Mammary epithelial cell (primary cell): ENCODE measurements at regions of chr1 and their contacts with region 1.

Region 1: DNA sequence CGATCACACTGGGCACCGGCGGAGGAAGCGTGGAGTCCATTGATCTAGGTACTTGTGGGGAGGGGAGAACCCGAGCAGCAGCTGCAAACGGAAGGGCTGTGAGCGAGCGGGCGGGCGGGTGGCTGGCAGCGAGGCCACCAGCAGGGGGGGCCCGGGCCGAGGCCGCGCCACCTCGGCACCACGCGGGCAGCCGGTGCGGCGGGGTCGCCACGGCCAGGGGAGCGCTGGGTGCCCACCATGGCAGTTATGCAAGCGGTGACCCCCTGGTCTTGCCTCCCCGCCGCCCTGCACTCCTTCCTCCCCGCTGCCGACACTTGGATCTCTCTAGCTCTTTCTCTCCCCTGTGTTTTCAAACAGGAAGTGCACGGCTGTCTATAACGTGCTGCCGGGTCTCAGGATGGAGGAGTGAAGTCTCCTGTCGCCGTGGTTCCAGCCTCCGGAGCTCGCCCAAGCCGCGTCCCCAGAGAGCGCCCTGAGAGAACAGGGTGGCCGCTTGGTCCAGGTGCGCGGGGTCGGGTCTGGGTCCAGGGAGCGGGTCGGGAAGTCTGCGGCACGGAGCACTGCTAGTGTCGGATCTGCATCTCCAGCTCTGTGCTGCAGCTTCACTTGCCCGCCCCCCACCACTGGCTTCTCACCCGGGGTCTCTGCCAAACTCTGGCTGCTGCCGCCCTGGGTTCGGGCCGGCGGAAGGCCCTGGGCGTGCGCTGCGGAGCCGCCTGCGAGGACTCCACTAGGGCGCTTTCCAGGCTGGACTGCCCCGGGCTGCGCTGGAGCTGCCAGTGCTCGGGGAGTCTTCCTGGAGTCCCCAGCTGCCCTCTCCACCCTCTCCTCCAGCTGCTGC is 22.7 kb downstream of the LRRC8D start:
- DNase-seq: peak; percentile 63
- H3K4me3 ChIP-seq: peak overlapping the region; percentile 48 to 88 (median 72)
- H3K27ac ChIP-seq: peak overlapping the region; percentile 54
- H3K4me1 ChIP-seq: peaks cover 16% of the 10 kb centered on the region
- H3K27me3 ChIP-seq: no peaks in the 10 kb centered on the region
- CTCF ChIP-seq: peak; percentile 32 to 53

Region 2: GRCh38 chr1:89804642-89805237 is 38.8 kb before region 1 on chr1:
- CTCF ChIA-PET with region 1: interaction called, 4 read pairs
- dilution Hi-C with region 1: no loop called
- in situ Hi-C with region 1: no loop called
- intact Hi-C with region 1: loop called (anchors 1 kb)
- DNase-seq: peak; percentile 64
- H3K4me3 ChIP-seq: no peak overlapping the region
- H3K27ac ChIP-seq: no peak overlapping the region
- H3K4me1 ChIP-seq: peaks cover 19% of the 10 kb centered on the region
- H3K27me3 ChIP-seq: no peaks in the 10 kb centered on the region
- CTCF ChIP-seq: peak; percentile 93 to 95

Region 3: GRCh38 chr1:89890085-89890752 is 46.7 kb after region 1 on chr1:
- CTCF ChIA-PET with region 1: no interaction called
- dilution Hi-C with region 1: no loop called
- in situ Hi-C with region 1: no loop called
- intact Hi-C with region 1: loop called (anchors 5 kb)
- DNase-seq: peak; percentile 97
- H3K4me3 ChIP-seq: peak overlapping the region in 1 of 3 experiments; percentile 30
- H3K27ac ChIP-seq: peak overlapping the region; percentile 93
- H3K4me1 ChIP-seq: peaks cover 45% of the 10 kb centered on the region
- H3K27me3 ChIP-seq: no peaks in the 10 kb centered on the region
- CTCF ChIP-seq: no peak

Region 4: GRCh38 chr1:89908672-89909436 is 65.4 kb after region 1 on chr1:
- CTCF ChIA-PET with region 1: interaction called, 8 read pairs
- dilution Hi-C with region 1: no loop called
- in situ Hi-C with region 1: no loop called
- intact Hi-C with region 1: loop called (anchors 2 kb)
- DNase-seq: peak; percentile 74
- H3K4me3 ChIP-seq: no peak overlapping the region
- H3K27ac ChIP-seq: peak overlapping the region; percentile 25
- H3K4me1 ChIP-seq: peaks cover 31% of the 10 kb centered on the region
- H3K27me3 ChIP-seq: no peaks in the 10 kb centered on the region
- CTCF ChIP-seq: no peak

Region 5: DNA sequence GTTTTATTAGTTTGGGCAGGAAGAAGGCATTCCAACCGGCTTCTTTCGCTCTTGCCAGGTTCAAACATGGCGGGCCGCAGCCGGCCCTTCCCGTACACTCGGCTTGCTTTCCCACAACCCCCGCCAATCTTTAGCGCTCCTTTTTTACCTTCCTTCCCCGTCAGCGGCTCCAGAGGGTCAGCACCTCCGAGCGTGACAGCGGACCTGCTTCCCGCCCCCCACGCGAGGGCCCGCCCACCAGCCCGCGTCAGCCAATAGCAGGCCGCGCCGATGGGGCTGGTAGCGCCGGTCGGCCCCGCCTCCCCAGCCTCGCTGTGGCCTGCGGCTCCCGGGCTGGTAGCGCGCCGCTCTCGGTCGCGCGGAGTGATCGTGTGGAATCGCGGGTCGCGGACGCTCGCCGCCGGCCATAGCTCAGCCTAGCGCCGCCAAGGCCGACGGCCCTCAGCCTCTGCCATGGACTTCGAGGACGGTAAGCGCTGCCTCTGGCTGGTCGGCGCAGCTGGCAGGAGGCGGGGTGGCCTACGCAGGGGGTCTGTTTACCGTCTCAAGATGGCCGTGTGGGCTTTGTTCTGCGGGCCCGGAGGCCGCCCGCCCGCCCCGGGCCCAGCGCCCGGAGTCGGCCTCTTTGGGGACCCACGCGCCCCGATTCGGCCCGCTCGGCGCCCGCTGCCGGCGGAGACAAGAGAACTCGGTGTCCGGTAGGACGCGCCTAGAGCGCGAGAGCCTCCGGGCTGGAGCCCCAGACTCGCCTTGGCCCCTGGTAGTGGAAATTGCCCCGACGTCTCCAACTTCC is 151.5 kb after region 1 on chr1 and contains the start of gene ZNF326:
- CTCF ChIA-PET with region 1: no interaction called
- dilution Hi-C with region 1: no loop called
- in situ Hi-C with region 1: no loop called
- intact Hi-C with region 1: loop called (anchors 2 kb)
- DNase-seq: peak; percentile 98
- H3K4me3 ChIP-seq: peak within 1 kb of the TSS; percentile 73 to 97 (median 84)
- H3K27ac ChIP-seq: peak within 1 kb of the TSS; percentile 89
- H3K4me1 ChIP-seq: peaks cover 27% of the 10 kb centered on the region
- H3K27me3 ChIP-seq: no peaks in the 10 kb centered on the region
- CTCF ChIP-seq: no peak
- total RNA-seq, gene ZNF326: 12.7 to 26.8 TPM